H1 (cell line): ENCODE measurements at regions of chr6 and their contacts with region 1.

Region 1: DNA sequence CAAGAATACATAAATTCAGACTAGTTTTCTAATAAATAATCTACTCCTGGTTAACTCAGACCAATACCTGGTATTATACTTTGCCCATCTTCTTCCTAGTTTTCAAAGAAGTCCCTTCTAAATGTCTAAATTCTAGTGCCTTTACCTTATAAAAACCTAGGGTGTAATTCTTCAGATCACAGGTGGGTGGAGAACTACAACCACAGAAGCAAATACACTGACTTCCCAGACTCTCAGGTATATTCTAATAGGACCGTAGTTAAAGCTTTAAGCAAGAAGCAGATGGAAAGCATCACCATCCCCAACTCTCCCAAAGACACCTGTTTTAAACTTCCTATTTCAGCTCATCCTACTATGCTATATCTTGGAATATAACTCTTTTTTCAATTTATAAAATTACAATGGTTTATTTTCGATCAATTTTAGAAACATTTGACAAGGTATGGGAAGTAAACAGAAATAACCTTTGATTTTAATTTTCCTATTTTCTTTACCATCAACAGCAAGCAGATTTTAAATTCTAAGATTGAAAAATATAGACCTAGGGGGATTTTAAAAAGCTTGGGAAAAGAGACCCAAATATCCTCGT is 15.8 kb downstream of the MAN1A1 start:
- DNase-seq: no peak
- H3K4me3 ChIP-seq: no peak overlapping the region
- H3K27ac ChIP-seq: no peak overlapping the region
- H3K4me1 ChIP-seq: peaks cover 0 to 3% (median 2%) of the 10 kb centered on the region in 4 experiments; a peak in 2 of 7 replicates
- H3K27me3 ChIP-seq: no peaks in the 10 kb centered on the region
- CTCF ChIP-seq: peak in 2 of 3 experiments; percentile 50 to 57; a peak in 2 of 4 replicates
- EP300 ChIP-seq: no peak
- POLR2A ChIP-seq: no peak
- RAD21 ChIP-seq: peak; percentile 85 to 87

Region 2: DNA sequence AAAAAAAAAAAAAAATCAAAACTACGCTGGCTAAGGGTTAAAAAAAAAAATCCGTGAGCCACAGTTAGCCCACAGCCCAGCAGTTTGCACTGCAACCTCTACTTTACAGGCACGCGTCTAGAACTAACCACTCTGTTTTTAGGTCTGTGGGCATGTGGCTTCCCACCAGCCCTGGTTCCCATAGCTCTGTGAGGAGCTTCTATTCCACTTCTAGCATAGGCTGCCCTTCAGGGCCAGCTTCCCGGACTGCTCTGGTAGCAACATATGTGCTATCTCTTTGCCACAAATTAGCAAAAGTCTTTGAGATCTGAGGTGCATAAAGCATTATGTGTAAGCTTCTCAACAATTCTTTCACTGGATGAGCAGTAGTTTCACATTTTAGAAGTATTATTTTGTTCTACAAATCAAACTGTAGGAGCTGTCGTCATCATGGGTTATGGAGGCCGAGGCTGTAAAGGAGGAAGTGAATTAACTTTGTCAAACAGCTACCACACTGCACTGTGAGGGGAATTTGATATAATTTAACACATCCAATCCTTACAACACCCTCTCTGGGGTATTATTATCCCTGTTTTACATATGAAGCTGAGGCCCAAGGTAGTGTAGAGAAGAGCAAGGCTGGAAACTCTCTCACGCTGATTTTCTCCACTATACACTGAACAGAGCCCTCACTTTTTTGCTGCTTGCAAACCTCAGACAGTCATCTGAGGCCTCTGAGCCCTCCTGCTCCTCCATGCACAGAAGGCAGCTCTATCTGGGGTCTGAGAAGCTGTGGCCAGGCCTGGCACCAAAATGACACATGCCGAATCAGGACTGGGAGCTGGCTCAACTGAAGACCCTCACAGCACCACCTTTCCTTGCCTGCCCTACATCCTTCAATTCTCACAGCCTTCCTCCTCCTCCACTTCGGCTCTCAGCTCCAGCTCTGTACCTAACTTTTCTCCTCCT is 19.6 kb before region 1 on chr6:
- CTCF ChIA-PET with region 1: interaction called, 12 read pairs
- POLR2A ChIA-PET with region 1: no interaction called
- DNase-seq: no peak
- H3K4me3 ChIP-seq: no peak overlapping the region
- H3K27ac ChIP-seq: no peak overlapping the region
- H3K4me1 ChIP-seq: no peaks in the 10 kb centered on the region; a peak in 1 of 7 replicates
- H3K27me3 ChIP-seq: no peaks in the 10 kb centered on the region
- CTCF ChIP-seq: no peak
- EP300 ChIP-seq: no peak
- POLR2A ChIP-seq: no peak
- RAD21 ChIP-seq: no peak

Region 3: GRCh38 chr6:119322715-119323350 is 11.0 kb before region 1 on chr6:
- CTCF ChIA-PET with region 1: interaction called, 20 read pairs
- POLR2A ChIA-PET with region 1: no interaction called
- DNase-seq: no peak
- H3K4me3 ChIP-seq: no peak overlapping the region
- H3K27ac ChIP-seq: no peak overlapping the region
- H3K4me1 ChIP-seq: no peaks in the 10 kb centered on the region
- H3K27me3 ChIP-seq: no peaks in the 10 kb centered on the region
- CTCF ChIP-seq: no peak
- EP300 ChIP-seq: no peak
- POLR2A ChIP-seq: no peak
- RAD21 ChIP-seq: no peak

Region 4: DNA sequence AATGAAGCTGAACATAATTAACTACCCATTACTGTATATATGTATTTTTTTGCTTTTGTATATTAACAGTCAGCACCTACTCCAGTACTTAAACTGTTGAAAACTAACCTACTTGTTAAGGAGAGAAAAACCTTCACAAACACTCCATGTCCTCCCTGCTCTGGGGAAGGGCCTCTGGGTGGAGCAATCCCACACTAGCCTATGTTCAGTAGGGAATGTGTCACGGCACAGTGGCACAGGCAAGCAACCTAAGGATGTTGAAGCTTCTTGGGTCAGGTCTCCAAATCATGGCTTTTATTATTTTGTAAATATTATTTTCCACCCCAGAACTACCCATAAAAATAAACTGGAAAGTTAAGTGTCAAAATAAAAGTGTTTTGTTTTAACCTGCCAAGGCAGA is 10.5 kb after region 1 on chr6:
- CTCF ChIA-PET with region 1: interaction called, 23 read pairs
- POLR2A ChIA-PET with region 1: no interaction called
- DNase-seq: no peak
- H3K4me3 ChIP-seq: no peak overlapping the region
- H3K27ac ChIP-seq: no peak overlapping the region
- H3K4me1 ChIP-seq: peaks cover 2 to 8% (median 7%) of the 10 kb centered on the region in 4 experiments
- H3K27me3 ChIP-seq: peaks cover 0 to 12% (median 10%) of the 10 kb centered on the region in 4 experiments; a peak in 5 of 7 replicates
- CTCF ChIP-seq: peak in 1 of 3 experiments; percentile 17; a peak in 1 of 4 replicates
- EP300 ChIP-seq: no peak
- POLR2A ChIP-seq: no peak
- RAD21 ChIP-seq: 0 out of 4 replicates have a peak, but pooled peaks of 1 of the 2 experiments have one; percentile 3

Region 5: GRCh38 chr6:119349323-119350042 is 15.7 kb after region 1 on chr6 and contains the start of gene MAN1A1:
- CTCF ChIA-PET with region 1: interaction called, 23 read pairs
- POLR2A ChIA-PET with region 1: no interaction called
- DNase-seq: peak; percentile 36 to 94
- H3K4me3 ChIP-seq: peak within 1 kb of the TSS; percentile 59 to 94 (median 74)
- H3K27ac ChIP-seq: no peak within 1 kb of the TSS
- H3K4me1 ChIP-seq: peaks cover 2 to 10% (median 5%) of the 10 kb centered on the region in 4 experiments; a peak in 4 of 7 replicates
- H3K27me3 ChIP-seq: peaks cover 0 to 18% (median 14%) of the 10 kb centered on the region in 4 experiments; a peak in 6 of 7 replicates
- CTCF ChIP-seq: no peak
- EP300 ChIP-seq: no peak
- POLR2A ChIP-seq: no peak; a peak in 1 of 3 replicates
- RAD21 ChIP-seq: no peak
- total RNA-seq, gene MAN1A1: 5.4 TPM in 2 replicates

Region 6: DNA sequence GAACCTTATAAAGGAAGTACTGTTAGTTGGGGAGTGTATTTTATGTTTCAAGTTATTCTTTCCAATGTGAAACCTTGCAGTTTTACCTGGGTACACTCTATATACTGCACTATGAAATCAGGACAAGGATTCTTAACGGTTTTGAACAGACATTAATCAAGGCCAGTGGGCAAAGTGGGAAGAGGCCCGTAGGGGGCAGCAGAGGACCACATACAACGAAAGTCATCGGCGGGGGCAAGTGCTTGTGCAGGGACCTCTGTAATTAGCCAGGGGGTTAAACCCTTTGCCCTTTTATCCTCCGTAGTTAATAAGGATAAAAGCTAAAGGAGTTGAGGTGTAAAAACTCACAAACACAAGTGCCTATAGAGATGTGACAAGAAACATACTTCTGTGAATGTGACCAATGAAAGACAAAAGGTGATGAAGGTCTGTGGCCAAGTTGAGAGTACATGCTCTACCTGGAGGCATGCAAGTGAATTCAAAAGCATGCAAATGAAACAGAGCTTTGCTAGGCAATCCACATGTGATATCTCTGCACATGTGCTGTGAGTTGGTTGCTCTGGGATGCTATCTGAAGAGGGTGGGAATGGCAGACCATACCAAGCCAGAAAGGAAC is 408.5 kb after region 1 on chr6:
- CTCF ChIA-PET with region 1: interaction called, 11 read pairs
- POLR2A ChIA-PET with region 1: no interaction called
- DNase-seq: peak in 1 of 2 experiments; percentile 91
- H3K4me3 ChIP-seq: no peak overlapping the region
- H3K27ac ChIP-seq: no peak overlapping the region
- H3K4me1 ChIP-seq: no peaks in the 10 kb centered on the region
- H3K27me3 ChIP-seq: no peaks in the 10 kb centered on the region
- CTCF ChIP-seq: peak; percentile 74 to 84 (median 78)
- EP300 ChIP-seq: no peak
- POLR2A ChIP-seq: no peak
- RAD21 ChIP-seq: peak; percentile 95 to 97